ENCODE measurements at regions of chr2 and their contacts with region 1.

Region 1: DNA sequence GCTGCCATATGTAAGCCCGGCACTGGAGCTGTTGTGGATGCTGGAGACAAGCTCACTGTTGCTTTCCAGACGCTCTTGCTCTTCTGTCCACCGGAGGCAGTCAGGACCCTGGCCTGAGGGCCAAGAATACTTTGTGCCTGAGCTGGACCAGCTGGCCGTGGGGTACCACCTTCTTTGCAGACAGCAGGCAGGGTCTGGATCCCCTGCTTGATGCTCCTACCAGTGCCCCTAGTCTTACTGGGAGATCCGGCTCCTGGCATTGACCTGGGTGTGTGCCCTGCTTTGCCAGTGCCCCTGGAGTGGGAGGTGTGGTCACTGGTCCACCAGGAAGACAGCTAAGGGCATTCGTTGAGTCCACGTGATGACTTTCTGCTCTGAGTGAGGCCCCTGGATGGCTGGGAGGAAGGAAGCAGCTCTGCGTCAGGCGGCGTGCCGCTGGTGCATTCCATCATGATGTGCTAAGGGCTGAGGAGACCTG is 59.3 kb downstream of the LRRFIP1 start:
- DNase-seq: no peak
- ATAC-seq: no peak
- H3K4me3 ChIP-seq: no peak overlapping the region
- H3K27ac ChIP-seq: no peak overlapping the region
- H3K4me1 ChIP-seq: peaks cover 42% of the 10 kb centered on the region
- H3K27me3 ChIP-seq: no peaks in the 10 kb centered on the region
- CTCF ChIP-seq: peak; percentile 49

Region 2: GRCh38 chr2:237529452-237530402 is 157.0 kb before region 1 on chr2:
- CTCF ChIA-PET with region 1: no interaction called
- POLR2A ChIA-PET with region 1: interaction called, 31 read pairs
- intact Hi-C with region 1: no loop called
- DNase-seq: no peak
- ATAC-seq: no peak
- H3K4me3 ChIP-seq: no peak overlapping the region
- H3K27ac ChIP-seq: no peak overlapping the region
- H3K4me1 ChIP-seq: no peaks in the 10 kb centered on the region
- H3K27me3 ChIP-seq: no peaks in the 10 kb centered on the region
- CTCF ChIP-seq: no peak